ENCODE measurements at regions of chr10 and their contacts with region 1.

Region 1: GRCh38 chr10:5977471-5978229 is at the start of gene IL15RA:
- DNase-seq: peak; percentile 76 to 78
- ATAC-seq: peak; percentile 83 to 90 (median 86)
- H3K4me3 ChIP-seq: peak within 1 kb of the TSS; percentile 68 to 97 (median 90)
- H3K27ac ChIP-seq: peak within 1 kb of the TSS; percentile 91 to 99 (median 96)
- H3K4me1 ChIP-seq: peaks cover 0 to 50% (median 21%) of the 10 kb centered on the region in 9 donors
- H3K27me3 ChIP-seq: no peaks in the 10 kb centered on the region
- CTCF ChIP-seq: peak in 5 of 9 donors; percentile 8 to 40 (median 38)
- total RNA-seq, gene IL15RA: 3.5 to 21.0 (median 5.6) TPM

Region 2: DNA sequence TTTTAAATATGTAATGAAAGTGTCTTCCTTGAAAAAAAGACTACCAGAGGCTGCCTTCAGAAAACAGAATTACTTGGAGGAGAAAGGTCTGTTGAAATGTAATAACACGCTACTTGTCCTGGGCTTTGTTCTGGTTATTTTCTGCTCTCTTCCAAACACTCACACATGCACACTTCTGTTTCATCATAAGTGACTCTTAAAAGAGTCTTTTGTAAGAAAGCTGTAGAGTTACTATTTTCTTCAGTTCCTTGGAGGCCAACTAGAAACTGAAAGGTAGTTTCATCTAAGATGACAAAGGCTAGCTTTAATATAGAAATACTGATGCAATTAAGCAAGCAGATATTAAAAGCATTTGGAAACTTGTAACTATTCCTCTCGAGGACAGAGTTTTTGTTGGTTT is 254.0 kb before region 1 on chr10:
- intact Hi-C with region 1: no loop called
- DNase-seq: no peak
- ATAC-seq: no peak
- H3K4me3 ChIP-seq: no peak overlapping the region
- H3K27ac ChIP-seq: no peak overlapping the region
- H3K4me1 ChIP-seq: no peaks in the 10 kb centered on the region
- H3K27me3 ChIP-seq: no peaks in the 10 kb centered on the region
- CTCF ChIP-seq: no peak

Region 3: DNA sequence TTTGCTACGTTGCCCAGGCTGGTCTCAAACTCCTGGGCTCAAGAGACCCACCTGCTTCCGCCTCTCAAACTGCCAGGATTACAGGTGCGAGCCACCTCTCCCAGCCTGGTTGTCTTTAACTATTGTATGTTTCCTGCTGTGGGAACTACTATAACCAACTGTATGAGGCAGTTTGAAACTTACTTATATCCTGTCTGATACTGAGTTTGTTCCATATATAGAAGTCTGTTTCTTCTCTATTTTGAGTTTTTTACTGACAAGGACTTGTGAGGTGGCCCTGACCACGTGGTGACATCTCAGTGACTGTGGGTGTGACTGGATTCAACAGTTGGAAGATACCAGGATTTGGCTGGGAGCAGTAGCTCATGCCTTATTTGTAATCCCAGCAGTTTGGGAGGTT is 73.4 kb before region 1 on chr10:
- intact Hi-C with region 1: loop called in 1 of 10 experiments (anchors 10 kb)
- DNase-seq: no peak
- ATAC-seq: peak in 6 of 8 donors; percentile 13 to 74 (median 59)
- H3K4me3 ChIP-seq: no peak overlapping the region
- H3K27ac ChIP-seq: peak overlapping the region in 5 of 10 donors; percentile 5 to 36 (median 19)
- H3K4me1 ChIP-seq: peaks cover 3 to 31% (median 20%) of the 10 kb centered on the region in 9 donors
- H3K27me3 ChIP-seq: no peaks in the 10 kb centered on the region
- CTCF ChIP-seq: no peak

Region 4: GRCh38 chr10:6014241-6014761 is 36.7 kb after region 1 on chr10:
- intact Hi-C with region 1: loop called in 1 of 10 experiments (anchors 5 kb)
- DNase-seq: peak in 1 of 2 donors; percentile 75
- ATAC-seq: peak in 7 of 8 donors; percentile 23 to 63 (median 55)
- H3K4me3 ChIP-seq: peak overlapping the region in 1 of 10 donors; percentile 33
- H3K27ac ChIP-seq: peak overlapping the region in 2 of 10 donors; percentile 11 to 48
- H3K4me1 ChIP-seq: peaks cover 0 to 21% (median 8%) of the 10 kb centered on the region in 9 donors
- H3K27me3 ChIP-seq: no peaks in the 10 kb centered on the region
- CTCF ChIP-seq: peak; percentile 52 to 88 (median 79)

Measured in heart right ventricle (tissue), 16 donors.